CD4-positive, alpha-beta memory T cell (primary cell): ENCODE measurements at regions of chr13 and their contacts with region 1.

Region 1: DNA sequence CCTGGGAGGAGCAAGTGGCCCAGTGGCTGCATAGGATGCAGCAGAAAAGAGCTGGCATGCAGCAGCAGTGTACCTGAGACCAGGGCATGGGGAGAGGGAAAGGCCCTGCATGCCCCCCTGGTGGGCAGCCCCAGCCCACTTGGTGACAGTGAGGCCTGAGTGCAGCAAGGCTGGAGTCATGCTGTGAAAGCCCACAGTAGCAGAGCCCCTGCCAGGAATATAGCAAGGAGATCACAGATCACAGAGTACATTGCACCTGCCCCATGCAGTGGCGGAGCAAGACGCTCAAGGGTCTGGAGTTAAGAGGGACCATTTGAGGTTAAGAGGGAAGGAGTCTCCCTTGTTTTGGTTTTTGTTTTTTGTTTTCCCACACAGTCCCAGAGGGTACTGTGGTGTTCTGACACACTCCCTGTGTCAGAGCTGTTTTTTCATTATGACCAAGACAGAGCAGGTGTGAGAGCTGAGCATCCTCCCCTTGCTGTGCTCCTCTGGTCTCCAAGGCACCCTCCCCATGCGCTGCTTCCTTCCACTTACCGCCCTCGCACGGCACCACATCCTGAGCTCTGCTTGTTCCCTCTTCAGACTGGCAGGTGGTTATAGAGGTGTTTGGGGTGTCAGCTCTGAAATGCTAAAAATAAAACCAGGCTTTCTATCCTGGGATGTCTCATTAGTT is 85.0 kb upstream of the UBL3 start:
- DNase-seq: peak; percentile 80 to 86 (median 84)
- H3K4me3 ChIP-seq: peak overlapping the region; percentile 72 to 82
- H3K4me3 Mint-ChIP-seq: peak overlapping the region; percentile 86 to 96 (median 94)
- H3K27ac ChIP-seq: peak overlapping the region; percentile 59
- H3K27ac Mint-ChIP-seq: peak overlapping the region; percentile 86 to 97 (median 92)
- H3K4me1 ChIP-seq: peaks cover 64% of the 10 kb centered on the region
- H3K4me1 Mint-ChIP-seq: peaks cover 46 to 77% (median 64%) of the 10 kb centered on the region in 4 donors
- H3K27me3 ChIP-seq: no peaks in the 10 kb centered on the region
- H3K27me3 Mint-ChIP-seq: peaks cover 0 to 2% of the 10 kb centered on the region in 2 donors

Region 2: GRCh38 chr13:29508130-29508875 is 427.1 kb before region 1 on chr13:
- CTCF ChIA-PET with region 1: interaction called, 5 read pairs
- POLR2A ChIA-PET with region 1: no interaction called
- intact Hi-C with region 1: loop called (anchors 5 kb)
- DNase-seq: peak; percentile 52 to 65 (median 55)
- H3K4me3 ChIP-seq: no peak overlapping the region
- H3K4me3 Mint-ChIP-seq: no peak overlapping the region
- H3K27ac ChIP-seq: no peak overlapping the region
- H3K27ac Mint-ChIP-seq: peak overlapping the region in 1 of 7 donors; percentile 24
- H3K4me1 ChIP-seq: no peaks in the 10 kb centered on the region
- H3K4me1 Mint-ChIP-seq: peaks cover 0 to 4% (median 0%) of the 10 kb centered on the region in 4 donors
- H3K27me3 ChIP-seq: no peaks in the 10 kb centered on the region
- H3K27me3 Mint-ChIP-seq: peaks cover 0 to 6% of the 10 kb centered on the region in 2 donors

Region 3: GRCh38 chr13:29902101-29902952 is 33.1 kb before region 1 on chr13:
- CTCF ChIA-PET with region 1: interaction called, 42 read pairs
- POLR2A ChIA-PET with region 1: interaction called, 59 read pairs
- intact Hi-C with region 1: loop called (anchors 1 kb)
- DNase-seq: peak; percentile 49 to 56 (median 51)
- H3K4me3 ChIP-seq: peak overlapping the region; percentile 7 to 36
- H3K4me3 Mint-ChIP-seq: peak overlapping the region; percentile 86 to 97 (median 92)
- H3K27ac ChIP-seq: peak overlapping the region; percentile 32
- H3K27ac Mint-ChIP-seq: peak overlapping the region; percentile 73 to 97 (median 95)
- H3K4me1 ChIP-seq: peaks cover 28% of the 10 kb centered on the region
- H3K4me1 Mint-ChIP-seq: peaks cover 16 to 29% (median 25%) of the 10 kb centered on the region in 4 donors
- H3K27me3 ChIP-seq: no peaks in the 10 kb centered on the region
- H3K27me3 Mint-ChIP-seq: peaks cover 0 to 1% of the 10 kb centered on the region in 2 donors

Region 4: DNA sequence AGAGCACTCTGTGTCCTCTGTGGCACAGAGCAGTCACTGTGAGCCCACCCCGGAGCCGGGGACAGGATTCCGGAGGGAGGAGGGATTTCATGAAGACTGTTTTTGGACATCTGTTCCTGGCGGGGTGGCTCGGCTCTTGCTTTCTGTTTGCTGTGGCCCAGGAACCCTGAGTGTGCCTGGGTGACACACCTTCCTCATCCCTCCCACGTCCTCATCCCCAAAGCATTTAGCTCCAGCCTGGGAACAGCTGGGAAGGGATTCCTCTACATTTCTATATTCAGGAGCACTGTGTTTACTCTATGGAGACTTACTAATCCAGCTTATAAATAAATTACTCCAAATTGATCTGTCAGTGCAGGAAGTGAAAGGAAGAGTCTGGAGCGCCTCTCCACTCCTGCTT is 12.8 kb after region 1 on chr13:
- CTCF ChIA-PET with region 1: interaction called, 68 read pairs
- POLR2A ChIA-PET with region 1: interaction called, 247 read pairs
- intact Hi-C with region 1: no loop called
- DNase-seq: no peak
- H3K4me3 ChIP-seq: no peak overlapping the region
- H3K4me3 Mint-ChIP-seq: no peak overlapping the region
- H3K27ac ChIP-seq: no peak overlapping the region
- H3K27ac Mint-ChIP-seq: peak overlapping the region in 3 of 7 donors; percentile 22 to 31 (median 22)
- H3K4me1 ChIP-seq: peaks cover 25% of the 10 kb centered on the region
- H3K4me1 Mint-ChIP-seq: peaks cover 8 to 29% (median 14%) of the 10 kb centered on the region in 4 donors
- H3K27me3 ChIP-seq: no peaks in the 10 kb centered on the region
- H3K27me3 Mint-ChIP-seq: no peaks in the 10 kb centered on the region

Region 5: GRCh38 chr13:30091691-30092090 is 156.2 kb after region 1 on chr13:
- CTCF ChIA-PET with region 1: no interaction called
- POLR2A ChIA-PET with region 1: no interaction called
- intact Hi-C with region 1: no loop called
- DNase-seq: no peak
- H3K4me3 ChIP-seq: no peak overlapping the region
- H3K4me3 Mint-ChIP-seq: no peak overlapping the region
- H3K27ac ChIP-seq: no peak overlapping the region
- H3K27ac Mint-ChIP-seq: no peak overlapping the region
- H3K4me1 ChIP-seq: no peaks in the 10 kb centered on the region
- H3K4me1 Mint-ChIP-seq: peaks cover 0 to 2% (median under 1%) of the 10 kb centered on the region in 4 donors
- H3K27me3 ChIP-seq: no peaks in the 10 kb centered on the region
- H3K27me3 Mint-ChIP-seq: peaks cover 0 to 4% of the 10 kb centered on the region in 2 donors

Region 6: GRCh38 chr13:30142486-30143211 is 207.2 kb after region 1 on chr13:
- CTCF ChIA-PET with region 1: interaction called, 11 read pairs
- POLR2A ChIA-PET with region 1: interaction called, 21 read pairs
- intact Hi-C with region 1: no loop called
- DNase-seq: peak; percentile 13 to 64 (median 22)
- H3K4me3 ChIP-seq: no peak overlapping the region
- H3K4me3 Mint-ChIP-seq: peak overlapping the region in 7 of 8 donors; percentile 4 to 74 (median 53)
- H3K27ac ChIP-seq: peak overlapping the region; percentile 27
- H3K27ac Mint-ChIP-seq: peak overlapping the region; percentile 83 to 92 (median 88)
- H3K4me1 ChIP-seq: peaks cover 67% of the 10 kb centered on the region
- H3K4me1 Mint-ChIP-seq: peaks cover 49 to 86% (median 70%) of the 10 kb centered on the region in 4 donors
- H3K27me3 ChIP-seq: no peaks in the 10 kb centered on the region
- H3K27me3 Mint-ChIP-seq: no peaks in the 10 kb centered on the region

Region 7: DNA sequence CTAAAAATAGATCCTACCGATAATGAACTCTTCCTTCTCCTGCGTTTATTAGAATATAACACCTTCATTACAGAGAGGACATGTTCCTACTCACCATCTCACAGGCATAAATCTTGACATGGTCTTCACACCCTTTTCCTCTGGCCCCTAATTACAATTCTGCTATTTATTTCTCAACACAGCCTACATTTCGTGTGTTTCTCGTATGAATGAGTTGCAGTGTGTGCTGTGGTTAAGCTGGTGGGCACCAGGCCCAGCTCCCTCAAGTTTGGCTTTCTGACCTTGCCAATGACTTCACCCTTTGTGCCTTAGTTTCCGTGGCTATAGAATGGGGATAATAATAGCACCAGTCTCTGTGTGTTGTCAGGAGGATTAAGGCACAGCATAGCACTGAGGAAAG is 384.2 kb after region 1 on chr13:
- CTCF ChIA-PET with region 1: no interaction called
- POLR2A ChIA-PET with region 1: no interaction called
- intact Hi-C with region 1: no loop called
- DNase-seq: no peak
- H3K4me3 ChIP-seq: no peak overlapping the region
- H3K4me3 Mint-ChIP-seq: no peak overlapping the region
- H3K27ac ChIP-seq: no peak overlapping the region
- H3K27ac Mint-ChIP-seq: peak overlapping the region in 1 of 7 donors; percentile 75
- H3K4me1 ChIP-seq: no peaks in the 10 kb centered on the region
- H3K4me1 Mint-ChIP-seq: peaks cover 0 to 8% (median 6%) of the 10 kb centered on the region in 4 donors
- H3K27me3 ChIP-seq: no peaks in the 10 kb centered on the region
- H3K27me3 Mint-ChIP-seq: no peaks in the 10 kb centered on the region